HepG2 (cell line): ENCODE measurements at regions of chr16 and their contacts with region 1.

Region 1: GRCh38 chr16:89410794-89411309 is 79.5 kb downstream of the ANKRD11 start:
- DNase-seq: peak; percentile 34
- ATAC-seq: peak; percentile 55
- H3K4me3 ChIP-seq: no peak overlapping the region
- H3K27ac ChIP-seq: peak overlapping the region; percentile 2
- H3K4me1 ChIP-seq: peaks cover 99% of the 10 kb centered on the region
- H3K27me3 ChIP-seq: no peaks in the 10 kb centered on the region
- CTCF ChIP-seq: no peak
- EP300 ChIP-seq: no peak
- POLR2A ChIP-seq: no peak
- RAD21 ChIP-seq: peak; percentile 37; the same call in 1 of the 2 replicates

Region 2: GRCh38 chr16:89330177-89330856 is 80.5 kb before region 1 on chr16:
- CTCF ChIA-PET with region 1: no interaction called
- POLR2A ChIA-PET with region 1: no interaction called
- in situ Hi-C with region 1: no loop called
- intact Hi-C with region 1: loop called (anchors 10 kb)
- DNase-seq: peak; percentile 84
- ATAC-seq: peak; percentile 84
- H3K4me3 ChIP-seq: peak overlapping the region in 1 of 3 experiments; percentile 30; a peak in 1 of 6 replicates
- H3K27ac ChIP-seq: peak overlapping the region; percentile 42
- H3K4me1 ChIP-seq: peaks cover 84% of the 10 kb centered on the region
- H3K27me3 ChIP-seq: no peaks in the 10 kb centered on the region
- CTCF ChIP-seq: no peak; the same call in 1 of the 2 replicates
- EP300 ChIP-seq: peak in 1 of 2 experiments; percentile 80; a peak in 1 of 4 replicates
- POLR2A ChIP-seq: no peak
- RAD21 ChIP-seq: no peak

Region 3: DNA sequence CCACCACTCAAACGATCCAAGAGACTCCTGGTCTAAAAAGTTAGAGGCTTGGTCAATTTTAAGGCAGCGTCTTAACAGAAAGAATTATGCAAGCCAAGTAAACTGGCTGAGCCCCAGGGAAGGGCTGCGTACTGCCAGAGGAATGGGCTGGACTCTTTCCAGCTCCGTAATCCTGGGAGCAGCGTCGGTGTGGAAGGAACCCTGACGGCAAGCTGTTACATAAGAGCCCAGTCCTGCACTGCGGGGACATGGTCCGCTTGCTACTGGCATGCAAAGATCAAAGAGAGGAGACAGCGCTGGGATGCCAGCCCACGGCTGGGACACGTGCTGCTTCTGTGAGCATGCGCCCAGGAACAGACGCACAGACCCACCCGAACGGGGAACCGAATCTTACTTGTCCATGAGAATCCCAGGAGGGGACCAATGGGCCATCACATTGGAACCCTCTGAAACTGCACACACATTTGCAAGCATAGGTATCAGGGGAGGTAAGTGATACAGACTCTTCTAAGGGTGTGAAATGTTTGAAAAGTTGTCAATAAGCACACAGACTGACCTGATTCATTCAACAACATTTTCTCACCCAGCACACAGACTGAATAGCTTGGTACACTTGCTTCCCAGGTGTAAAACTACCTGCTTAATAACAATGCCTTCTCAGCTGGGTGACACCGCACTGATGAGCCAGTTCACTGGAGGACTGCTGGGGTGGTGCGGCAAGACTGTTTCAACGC is 15.5 kb before region 1 on chr16:
- CTCF ChIA-PET with region 1: no interaction called
- POLR2A ChIA-PET with region 1: interaction called, 3 read pairs
- in situ Hi-C with region 1: no loop called
- intact Hi-C with region 1: loop called (anchors 2 kb)
- DNase-seq: peak; percentile 97
- ATAC-seq: peak; percentile 91
- H3K4me3 ChIP-seq: peak overlapping the region in 1 of 3 experiments; percentile 27; a peak in 2 of 6 replicates
- H3K27ac ChIP-seq: peak overlapping the region; percentile 65
- H3K4me1 ChIP-seq: peaks cover 51% of the 10 kb centered on the region
- H3K27me3 ChIP-seq: no peaks in the 10 kb centered on the region
- CTCF ChIP-seq: peak; percentile 26; the same call in 1 of the 2 replicates
- EP300 ChIP-seq: peak; percentile 92 to 93
- POLR2A ChIP-seq: no peak
- RAD21 ChIP-seq: peak; percentile 58

Region 4: DNA sequence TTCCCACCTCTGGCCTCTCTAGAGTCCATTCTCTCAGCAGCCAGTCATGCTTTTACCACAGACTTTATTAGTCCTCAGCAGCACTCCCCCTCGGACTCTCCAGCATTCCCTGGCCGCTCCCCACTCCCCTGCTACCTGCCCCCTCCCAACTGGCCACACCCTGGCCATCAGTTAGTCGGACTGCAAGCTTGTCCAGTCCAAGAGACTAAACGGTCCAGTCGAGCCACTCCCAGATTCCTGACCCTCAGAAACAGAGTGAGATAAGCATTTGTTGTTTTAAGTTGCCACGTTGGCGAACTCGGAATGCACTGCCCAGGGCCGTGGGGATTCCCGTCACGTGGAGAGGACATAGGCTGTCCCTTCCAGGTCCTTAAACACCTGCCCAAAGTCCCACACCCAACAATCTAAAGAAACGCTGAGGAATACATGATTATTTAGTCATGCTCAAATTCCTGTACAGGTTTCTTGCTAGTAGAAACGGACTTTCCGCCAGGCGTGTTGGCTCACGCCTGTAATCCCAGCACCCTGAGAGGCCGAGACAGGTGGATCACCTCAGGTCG is 91.5 kb after region 1 on chr16:
- CTCF ChIA-PET with region 1: no interaction called
- POLR2A ChIA-PET with region 1: no interaction called
- in situ Hi-C with region 1: no loop called
- intact Hi-C with region 1: no loop called
- DNase-seq: peak; percentile 70
- ATAC-seq: no peak
- H3K4me3 ChIP-seq: peak overlapping the region in 1 of 3 experiments; percentile 36; a peak in 3 of 6 replicates
- H3K27ac ChIP-seq: peak overlapping the region; percentile 44
- H3K4me1 ChIP-seq: peaks cover 51% of the 10 kb centered on the region
- H3K27me3 ChIP-seq: no peaks in the 10 kb centered on the region
- CTCF ChIP-seq: no peak
- EP300 ChIP-seq: no peak
- POLR2A ChIP-seq: no peak
- RAD21 ChIP-seq: no peak